BJ (cell line): ENCODE measurements at regions of chr2 and their contacts with region 1.

Region 1: GRCh38 chr2:86221066-86221684 is 21.9 kb downstream of the MRPL35 start:
- DNase-seq: no peak
- H3K4me3 ChIP-seq: no peak overlapping the region
- H3K27me3 ChIP-seq: no peaks in the 10 kb centered on the region
- CTCF ChIP-seq: peak; percentile 89

Region 2: DNA sequence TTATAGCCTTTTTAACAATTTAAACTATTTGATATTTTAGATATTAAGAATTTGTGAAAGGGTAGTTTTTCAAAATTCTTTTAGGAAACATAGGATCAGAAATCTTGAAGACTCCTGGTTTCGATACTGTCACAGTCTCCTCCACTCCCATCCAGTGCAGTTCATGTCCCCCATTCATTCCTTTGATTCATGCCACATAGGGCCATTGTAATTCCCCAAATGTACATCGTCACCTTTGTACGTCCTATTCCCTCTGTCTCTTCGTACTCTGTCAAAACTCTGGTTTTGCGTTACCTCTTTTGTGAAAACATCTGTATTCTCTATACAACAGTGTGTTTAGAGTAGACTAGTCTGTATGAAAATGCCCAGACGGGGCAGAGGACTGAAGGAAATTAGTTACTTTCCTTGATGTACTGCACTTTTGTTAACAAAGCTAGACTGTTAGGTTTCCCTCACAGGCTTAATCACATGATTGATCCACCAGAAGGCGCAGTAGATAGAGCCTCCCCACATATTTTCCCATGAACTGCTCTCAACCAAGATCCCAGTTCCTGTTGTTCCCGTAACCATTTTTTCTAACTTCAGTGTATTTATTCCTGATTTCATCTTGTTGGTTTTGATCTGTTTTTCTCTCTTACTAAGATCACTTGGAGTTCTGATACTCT is 19.4 kb before region 1 on chr2:
- CTCF ChIA-PET with region 1: interaction called, 17 read pairs
- POLR2A ChIA-PET with region 1: no interaction called
- DNase-seq: no peak
- H3K4me3 ChIP-seq: no peak overlapping the region
- H3K27me3 ChIP-seq: no peaks in the 10 kb centered on the region
- CTCF ChIP-seq: no peak

Region 3: DNA sequence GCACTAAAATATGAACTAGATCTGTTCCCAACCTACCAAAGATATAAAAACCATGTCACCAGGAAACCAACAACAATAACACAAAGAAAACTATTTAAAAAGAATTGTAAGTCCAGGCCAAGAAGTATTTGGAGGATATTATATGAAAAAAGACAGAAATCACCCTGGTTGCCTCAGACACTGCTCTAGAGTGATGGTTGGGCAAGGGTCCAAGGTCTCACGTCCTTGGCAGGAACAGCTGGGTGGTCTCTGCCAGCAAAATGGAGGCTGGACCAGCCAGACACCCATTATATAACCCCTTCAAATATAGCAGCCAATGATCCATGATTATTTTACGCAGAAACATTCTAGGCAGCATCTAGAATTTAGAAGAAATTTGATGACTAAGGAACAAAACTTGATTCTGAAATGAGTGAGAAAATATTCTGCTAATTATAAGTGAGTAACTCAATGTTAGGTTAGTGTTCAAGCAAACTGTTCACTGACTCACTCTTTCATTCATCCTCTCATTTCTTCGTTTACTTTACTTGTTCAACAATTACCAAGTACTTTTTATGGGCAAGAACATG is 13.5 kb after region 1 on chr2:
- CTCF ChIA-PET with region 1: no interaction called
- POLR2A ChIA-PET with region 1: no interaction called
- DNase-seq: no peak
- H3K4me3 ChIP-seq: no peak overlapping the region
- H3K27me3 ChIP-seq: peaks cover 2% of the 10 kb centered on the region
- CTCF ChIP-seq: no peak

Region 4: DNA sequence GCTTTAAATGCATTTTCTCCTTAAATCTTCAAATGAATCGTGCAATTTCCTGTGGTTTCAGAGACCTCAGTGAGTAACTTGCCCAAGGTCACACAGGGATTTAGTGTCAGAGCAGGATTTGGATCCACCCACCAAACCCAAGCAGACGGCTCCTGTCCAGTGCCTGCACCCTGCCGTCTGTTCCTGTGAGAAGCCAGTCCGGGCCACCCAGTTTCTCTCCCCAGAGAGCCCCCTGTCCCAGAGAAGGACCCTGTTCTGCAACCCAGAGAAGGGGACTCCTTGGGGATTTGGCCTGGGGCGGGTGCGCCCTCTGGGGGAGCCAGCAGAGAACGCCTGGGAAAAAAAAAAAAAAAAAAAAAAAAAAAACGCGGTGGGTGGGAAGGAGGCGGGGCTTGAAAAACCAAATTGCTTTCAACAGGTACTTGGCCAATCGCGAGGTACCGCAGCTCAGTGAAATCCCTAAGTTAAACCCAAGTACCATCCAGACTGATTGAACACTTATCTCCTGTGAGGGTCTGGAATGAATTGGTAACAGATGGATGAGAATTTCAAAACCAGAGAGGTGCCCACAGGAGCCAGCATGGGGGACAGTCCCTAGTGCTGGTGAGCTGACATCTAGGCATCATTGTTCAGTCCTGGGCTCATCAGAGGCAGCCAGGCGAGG is 147.1 kb after region 1 on chr2:
- CTCF ChIA-PET with region 1: interaction called, 66 read pairs
- POLR2A ChIA-PET with region 1: no interaction called
- DNase-seq: no peak
- H3K4me3 ChIP-seq: no peak overlapping the region
- H3K27me3 ChIP-seq: no peaks in the 10 kb centered on the region
- CTCF ChIP-seq: peak; percentile 72